Activated T-helper 2 cell treated with anti-CD3 and anti-CD28 coated beads, Interferon-gamma antibody, Interleukin-2, Interleukin-4, amounts not matched to agents 10 μg/mL and 5 μg/mL and 100 μg/mL, durations not matched to agents 14 hours and 24 hours and 36 hours (primary cell): ENCODE measurements at regions of chr11 and their contacts with region 1.

Region 1: DNA sequence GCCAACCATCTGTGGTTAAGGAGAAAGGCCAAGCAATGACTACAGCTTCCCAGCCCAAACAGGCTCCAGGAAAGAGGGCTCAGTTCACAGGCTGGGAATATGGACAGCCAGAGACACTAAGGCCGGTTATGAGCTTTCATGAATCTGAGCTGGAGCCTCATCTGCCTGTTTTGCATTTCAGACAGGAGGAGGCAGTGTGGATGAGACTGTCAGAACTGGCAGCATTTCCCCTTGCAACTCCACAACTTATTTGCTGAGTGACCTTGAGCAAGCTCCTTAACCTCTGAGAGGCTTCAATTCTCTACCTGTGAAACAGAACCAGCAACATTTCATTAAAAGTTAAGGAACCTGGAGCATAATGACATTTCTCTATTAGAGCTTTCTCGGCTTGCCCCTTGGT is 264.0 kb downstream of the ETS1 start:
- DNase-seq: peak; percentile 44
- H3K4me3 Mint-ChIP-seq: peak overlapping the region; percentile 62
- H3K27ac Mint-ChIP-seq: peak overlapping the region; percentile 94
- H3K4me1 Mint-ChIP-seq: peaks cover 81% of the 10 kb centered on the region
- H3K27me3 Mint-ChIP-seq: no peaks in the 10 kb centered on the region

Region 2: GRCh38 chr11:126917531-126918204 is 1405.7 kb before region 1 on chr11:
- intact Hi-C with region 1: loop called (anchors 10 kb)
- DNase-seq: no peak
- H3K4me3 Mint-ChIP-seq: no peak overlapping the region
- H3K27ac Mint-ChIP-seq: peak overlapping the region; percentile 83
- H3K4me1 Mint-ChIP-seq: peaks cover 8% of the 10 kb centered on the region
- H3K27me3 Mint-ChIP-seq: no peaks in the 10 kb centered on the region

Region 3: DNA sequence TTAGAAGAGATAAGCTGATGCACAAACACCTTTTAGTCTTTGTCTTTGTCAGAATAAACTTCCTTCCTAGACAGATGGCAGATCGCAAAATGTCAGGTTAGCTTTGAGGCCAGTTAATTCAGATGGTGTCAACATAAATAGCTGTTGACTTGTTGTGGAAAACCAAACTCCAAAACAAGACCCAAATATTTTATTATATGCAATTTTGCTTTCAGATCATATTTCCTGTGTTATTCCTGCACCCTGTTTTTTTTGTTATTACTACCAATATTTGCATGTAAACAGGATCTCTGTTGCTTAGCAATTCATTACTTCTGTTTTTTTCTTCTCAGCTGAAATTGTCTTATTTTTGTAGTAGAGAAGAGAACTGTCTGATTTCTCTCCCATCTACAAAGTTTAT is 52.0 kb before region 1 on chr11:
- intact Hi-C with region 1: no loop called
- DNase-seq: no peak
- H3K4me3 Mint-ChIP-seq: no peak overlapping the region
- H3K27ac Mint-ChIP-seq: no peak overlapping the region
- H3K4me1 Mint-ChIP-seq: peaks cover 18% of the 10 kb centered on the region
- H3K27me3 Mint-ChIP-seq: peaks cover 2% of the 10 kb centered on the region

Region 4: DNA sequence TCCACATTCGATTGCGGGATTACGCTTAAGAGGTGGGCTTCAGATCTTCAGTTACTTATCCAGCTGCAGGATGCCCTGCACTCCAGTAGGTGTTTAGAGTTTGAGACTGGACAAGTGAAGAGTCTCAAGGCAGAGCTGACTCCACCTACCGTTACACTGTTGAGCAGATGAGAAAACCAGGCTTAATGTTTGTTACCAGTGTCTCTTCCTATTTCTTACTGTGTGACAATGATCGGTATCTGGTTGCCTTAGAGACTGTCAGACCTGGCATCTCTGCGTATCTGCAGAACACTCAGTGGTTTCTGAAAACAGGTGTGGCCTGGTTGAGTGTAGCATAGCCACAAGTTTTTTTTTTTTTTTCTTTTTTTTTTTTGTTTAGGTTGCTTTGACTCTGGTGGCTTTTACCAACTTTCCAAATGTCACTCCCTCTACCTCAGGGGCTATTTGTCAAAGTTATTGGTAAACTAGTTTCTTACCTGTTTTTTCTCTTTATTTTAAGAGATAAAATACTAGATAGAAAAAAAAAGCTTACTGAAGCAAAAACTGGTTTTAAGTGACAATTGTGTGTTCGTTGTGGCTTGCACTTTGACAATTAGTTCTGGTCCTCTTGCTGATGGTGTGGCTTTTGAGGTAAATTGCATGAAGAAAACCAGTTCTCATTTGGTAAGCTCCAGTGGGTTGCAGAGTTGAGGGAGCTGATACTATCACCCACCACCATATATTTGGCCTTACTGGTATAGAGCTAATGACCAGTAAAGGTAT is 20.8 kb before region 1 on chr11:
- intact Hi-C with region 1: loop called (anchors 1 kb)
- DNase-seq: peak; percentile 82
- H3K4me3 Mint-ChIP-seq: peak overlapping the region; percentile 90
- H3K27ac Mint-ChIP-seq: peak overlapping the region; percentile 96
- H3K4me1 Mint-ChIP-seq: peaks cover 71% of the 10 kb centered on the region
- H3K27me3 Mint-ChIP-seq: no peaks in the 10 kb centered on the region

Region 5: DNA sequence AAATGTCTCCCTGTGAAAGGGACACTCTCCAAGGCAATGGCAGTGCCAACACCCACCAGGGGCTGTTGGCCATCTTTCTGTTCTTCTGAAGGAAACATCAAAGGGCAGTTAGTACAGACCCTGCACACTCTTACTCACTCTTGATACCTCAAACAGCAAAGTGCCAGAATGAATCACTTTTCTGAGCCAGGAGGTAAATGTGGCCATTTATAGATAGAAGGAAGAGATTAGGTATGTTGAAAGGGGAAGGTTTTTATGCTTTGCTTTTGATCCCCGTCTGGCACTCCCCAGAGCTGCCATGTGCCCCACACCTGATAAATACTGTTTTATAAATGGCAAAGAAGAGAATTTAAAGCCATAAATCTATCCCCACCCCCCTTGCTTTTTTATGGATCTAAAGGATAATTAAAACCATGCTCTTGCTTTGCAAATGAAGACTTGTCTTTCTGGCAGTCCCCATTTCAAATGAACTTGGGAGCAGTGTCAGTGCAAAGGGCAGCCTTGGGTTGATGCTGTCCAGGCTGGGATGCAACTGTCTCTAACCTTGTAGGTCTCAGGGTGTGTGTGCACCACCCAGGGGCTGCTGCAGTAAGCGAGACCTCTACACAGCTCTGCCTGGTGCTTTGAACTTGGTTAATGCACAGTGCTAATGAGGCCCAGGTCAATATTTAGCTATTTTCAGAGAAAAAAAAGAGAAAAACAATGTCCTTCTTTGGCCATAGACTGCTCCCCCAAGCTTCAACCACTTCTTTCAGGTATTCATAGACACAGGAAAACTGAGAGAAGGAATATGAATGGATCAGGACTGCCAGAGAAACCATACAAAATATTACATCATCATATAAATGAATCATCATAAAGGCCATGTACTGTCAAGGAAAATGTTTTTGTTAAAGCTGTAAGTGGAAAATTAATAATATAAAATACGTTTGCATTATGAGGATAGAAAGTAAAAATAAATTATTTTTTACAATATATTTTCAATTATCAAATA is 56.5 kb after region 1 on chr11:
- intact Hi-C with region 1: loop called (anchors 2 kb)
- DNase-seq: peak; percentile 24
- H3K4me3 Mint-ChIP-seq: no peak overlapping the region
- H3K27ac Mint-ChIP-seq: peak overlapping the region; percentile 76
- H3K4me1 Mint-ChIP-seq: peaks cover 41% of the 10 kb centered on the region
- H3K27me3 Mint-ChIP-seq: no peaks in the 10 kb centered on the region

Region 6: DNA sequence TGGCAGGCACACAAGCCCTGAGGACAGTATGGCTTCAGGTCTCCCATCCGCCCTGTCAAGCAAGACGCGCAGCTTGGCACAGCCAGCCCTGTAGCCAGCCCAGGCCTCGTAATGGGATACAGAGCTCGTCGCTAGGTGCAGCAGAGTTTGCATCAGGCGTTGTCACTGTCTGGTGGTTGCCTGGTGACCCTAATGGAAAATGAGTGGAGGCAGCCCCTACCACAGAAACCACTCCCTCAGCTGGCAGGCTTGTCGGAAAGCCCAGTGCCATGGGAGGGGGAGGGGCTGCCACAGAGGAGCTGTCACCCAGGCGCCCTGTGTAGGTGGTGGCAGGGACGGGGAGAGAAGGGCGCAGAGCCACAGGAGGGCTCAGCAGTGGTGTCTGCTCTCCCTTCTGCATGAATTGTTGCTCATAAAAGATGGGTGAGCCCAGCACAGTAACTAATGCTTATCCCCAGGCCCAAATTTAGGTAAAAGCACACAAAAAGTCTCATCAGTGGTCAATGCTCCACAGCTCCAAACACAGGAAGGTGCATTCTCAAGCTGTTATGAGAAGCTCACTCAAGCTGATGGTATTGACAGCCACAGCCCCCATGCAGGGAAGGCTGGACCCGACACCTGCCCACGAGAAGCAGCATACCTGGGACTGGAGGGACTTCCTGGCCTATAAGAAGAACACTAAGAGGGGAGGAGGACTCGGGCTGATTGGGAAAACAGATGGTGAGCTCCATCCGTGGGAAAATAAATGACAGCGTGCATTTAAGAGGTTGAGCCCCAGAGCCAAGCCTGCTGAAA is 99.4 kb after region 1 on chr11:
- intact Hi-C with region 1: loop called (anchors 1 kb)
- DNase-seq: peak; percentile 66
- H3K4me3 Mint-ChIP-seq: peak overlapping the region; percentile 33
- H3K27ac Mint-ChIP-seq: peak overlapping the region; percentile 96
- H3K4me1 Mint-ChIP-seq: peaks cover 43% of the 10 kb centered on the region
- H3K27me3 Mint-ChIP-seq: no peaks in the 10 kb centered on the region